Naive thymus-derived CD4-positive, alpha-beta T cell (primary cell): ENCODE measurements at regions of chr11 and their contacts with region 1.

Region 1: GRCh38 chr11:112219476-112220232 is 6.6 kb upstream of the PTS start:
- DNase-seq: peak in 7 of 9 donors; percentile 54 to 77 (median 69)
- ATAC-seq: peak; percentile 99
- H3K4me3 ChIP-seq: no peak overlapping the region
- H3K4me3 Mint-ChIP-seq: no peak overlapping the region
- H3K27ac ChIP-seq: no peak overlapping the region
- H3K27ac Mint-ChIP-seq: peak overlapping the region in 2 of 9 donors; percentile 38 to 59
- H3K4me1 ChIP-seq: no peaks in the 10 kb centered on the region
- H3K4me1 Mint-ChIP-seq: peaks cover 0 to 17% (median 3%) of the 10 kb centered on the region in 7 donors
- H3K27me3 ChIP-seq: no peaks in the 10 kb centered on the region
- H3K27me3 Mint-ChIP-seq: peaks cover 0 to 4% (median 0%) of the 10 kb centered on the region in 5 donors

Region 2: DNA sequence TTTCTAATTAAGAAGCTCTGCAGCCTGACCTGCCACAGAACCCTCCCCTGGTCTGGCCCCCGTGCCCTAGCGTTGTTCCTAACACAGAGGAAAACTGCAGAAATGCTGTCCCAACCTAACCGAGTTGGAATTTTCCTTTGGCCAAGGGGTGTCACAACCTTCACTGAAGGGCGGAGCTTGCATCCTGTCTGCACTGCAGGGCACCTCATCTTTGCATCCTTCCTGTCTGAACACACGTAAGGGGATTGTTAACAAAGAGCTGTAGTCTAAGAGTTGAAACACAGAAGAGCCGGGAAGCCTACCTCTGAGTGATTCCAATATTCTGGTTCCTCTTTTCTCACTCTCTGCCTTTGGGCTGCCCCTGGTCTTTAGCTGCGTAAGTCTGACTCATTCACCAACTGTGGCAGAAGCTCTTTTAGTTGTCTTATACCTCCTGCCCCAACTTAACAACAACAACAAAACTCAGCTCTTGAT is 280.9 kb before region 1 on chr11:
- CTCF ChIA-PET with region 1: no interaction called
- POLR2A ChIA-PET with region 1: no interaction called
- intact Hi-C with region 1: loop called in 1 of 2 experiments (anchors 5 kb)
- DNase-seq: peak in 6 of 9 donors; percentile 18 to 38 (median 27)
- ATAC-seq: peak; percentile 73
- H3K4me3 ChIP-seq: no peak overlapping the region
- H3K4me3 Mint-ChIP-seq: peak overlapping the region; percentile 59 to 95 (median 78)
- H3K27ac ChIP-seq: peak overlapping the region; percentile 49
- H3K27ac Mint-ChIP-seq: peak overlapping the region; percentile 67 to 96 (median 84)
- H3K4me1 ChIP-seq: peaks cover 4 to 29% of the 10 kb centered on the region in 2 donors
- H3K4me1 Mint-ChIP-seq: peaks cover 16 to 48% (median 32%) of the 10 kb centered on the region in 7 donors
- H3K27me3 ChIP-seq: no peaks in the 10 kb centered on the region
- H3K27me3 Mint-ChIP-seq: no peaks in the 10 kb centered on the region

Region 3: GRCh38 chr11:112134473-112134872 is 85.2 kb before region 1 on chr11:
- CTCF ChIA-PET with region 1: no interaction called
- POLR2A ChIA-PET with region 1: no interaction called
- intact Hi-C with region 1: no loop called
- DNase-seq: no peak
- ATAC-seq: no peak
- H3K4me3 ChIP-seq: no peak overlapping the region
- H3K4me3 Mint-ChIP-seq: no peak overlapping the region
- H3K27ac ChIP-seq: no peak overlapping the region
- H3K27ac Mint-ChIP-seq: peak overlapping the region in 1 of 9 donors; percentile 74
- H3K4me1 ChIP-seq: no peaks in the 10 kb centered on the region
- H3K4me1 Mint-ChIP-seq: peaks cover 0 to 9% (median 0%) of the 10 kb centered on the region in 7 donors
- H3K27me3 ChIP-seq: no peaks in the 10 kb centered on the region
- H3K27me3 Mint-ChIP-seq: no peaks in the 10 kb centered on the region

Region 4: GRCh38 chr11:112280268-112281126 is 60.8 kb after region 1 on chr11:
- CTCF ChIA-PET with region 1: interaction called, 141 read pairs
- POLR2A ChIA-PET with region 1: interaction called, 11 read pairs
- intact Hi-C with region 1: loop called (anchors 1 kb)
- DNase-seq: peak; percentile 27 to 81 (median 73)
- ATAC-seq: peak; percentile 95
- H3K4me3 ChIP-seq: peak overlapping the region; percentile 78
- H3K4me3 Mint-ChIP-seq: peak overlapping the region; percentile 91 to 97 (median 94)
- H3K27ac ChIP-seq: peak overlapping the region; percentile 31
- H3K27ac Mint-ChIP-seq: peak overlapping the region; percentile 46 to 86 (median 66)
- H3K4me1 ChIP-seq: no peaks in the 10 kb centered on the region
- H3K4me1 Mint-ChIP-seq: peaks cover 7 to 36% (median 10%) of the 10 kb centered on the region in 7 donors
- H3K27me3 ChIP-seq: no peaks in the 10 kb centered on the region
- H3K27me3 Mint-ChIP-seq: no peaks in the 10 kb centered on the region

Region 5: GRCh38 chr11:112555491-112556364 is 336.1 kb after region 1 on chr11:
- CTCF ChIA-PET with region 1: interaction called, 14 read pairs
- POLR2A ChIA-PET with region 1: interaction called, 6 read pairs
- intact Hi-C with region 1: loop called (anchors 1 kb)
- DNase-seq: peak; percentile 43 to 79 (median 64)
- ATAC-seq: peak; percentile 85
- H3K4me3 ChIP-seq: no peak overlapping the region
- H3K4me3 Mint-ChIP-seq: no peak overlapping the region
- H3K27ac ChIP-seq: no peak overlapping the region
- H3K27ac Mint-ChIP-seq: peak overlapping the region in 3 of 9 donors; percentile 26 to 84 (median 52)
- H3K4me1 ChIP-seq: no peaks in the 10 kb centered on the region
- H3K4me1 Mint-ChIP-seq: peaks cover 0 to 5% (median 4%) of the 10 kb centered on the region in 7 donors
- H3K27me3 ChIP-seq: no peaks in the 10 kb centered on the region
- H3K27me3 Mint-ChIP-seq: peaks cover 0 to 6% (median 0%) of the 10 kb centered on the region in 5 donors

Region 6: DNA sequence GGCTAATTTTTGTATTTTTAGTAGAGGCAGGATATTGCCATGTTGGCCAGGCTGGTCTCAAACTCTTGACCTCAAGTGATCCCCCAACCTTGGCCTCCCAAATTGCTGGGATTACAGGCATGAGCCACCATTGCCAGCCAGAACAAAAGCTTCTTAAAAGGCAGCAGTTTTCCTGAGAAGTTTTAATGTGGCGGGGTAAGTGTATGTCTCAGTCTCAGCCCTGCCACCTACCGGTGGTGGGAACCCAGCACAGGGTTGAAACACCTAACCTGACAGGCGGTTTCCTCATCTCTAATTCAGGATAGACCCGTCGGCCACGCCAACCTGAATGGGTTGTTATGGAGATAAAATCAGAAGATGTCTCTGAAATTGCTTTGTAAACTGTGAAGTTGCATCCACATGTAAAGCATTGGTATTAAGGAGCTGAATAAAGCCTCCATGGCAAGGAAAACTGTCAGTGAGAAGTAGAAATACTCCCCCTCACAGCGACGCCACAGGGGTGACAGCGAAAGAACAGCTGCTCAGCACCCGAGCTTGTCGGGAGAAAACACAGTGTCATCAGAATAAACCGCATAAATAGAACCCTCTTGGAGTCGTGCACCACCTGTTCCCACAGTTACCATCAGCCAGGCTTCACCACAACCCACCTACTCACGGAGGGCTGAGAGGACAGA is 575.6 kb after region 1 on chr11:
- CTCF ChIA-PET with region 1: no interaction called
- POLR2A ChIA-PET with region 1: no interaction called
- intact Hi-C with region 1: loop called in 1 of 2 experiments (anchors 1 kb)
- DNase-seq: peak in 2 of 9 donors; percentile 11 to 14
- ATAC-seq: no peak
- H3K4me3 ChIP-seq: no peak overlapping the region
- H3K4me3 Mint-ChIP-seq: no peak overlapping the region
- H3K27ac ChIP-seq: no peak overlapping the region
- H3K27ac Mint-ChIP-seq: no peak overlapping the region
- H3K4me1 ChIP-seq: no peaks in the 10 kb centered on the region
- H3K4me1 Mint-ChIP-seq: peaks cover 0 to 12% (median 4%) of the 10 kb centered on the region in 7 donors
- H3K27me3 ChIP-seq: no peaks in the 10 kb centered on the region
- H3K27me3 Mint-ChIP-seq: peaks cover 6 to 20% (median 13%) of the 10 kb centered on the region in 5 donors

Region 7: DNA sequence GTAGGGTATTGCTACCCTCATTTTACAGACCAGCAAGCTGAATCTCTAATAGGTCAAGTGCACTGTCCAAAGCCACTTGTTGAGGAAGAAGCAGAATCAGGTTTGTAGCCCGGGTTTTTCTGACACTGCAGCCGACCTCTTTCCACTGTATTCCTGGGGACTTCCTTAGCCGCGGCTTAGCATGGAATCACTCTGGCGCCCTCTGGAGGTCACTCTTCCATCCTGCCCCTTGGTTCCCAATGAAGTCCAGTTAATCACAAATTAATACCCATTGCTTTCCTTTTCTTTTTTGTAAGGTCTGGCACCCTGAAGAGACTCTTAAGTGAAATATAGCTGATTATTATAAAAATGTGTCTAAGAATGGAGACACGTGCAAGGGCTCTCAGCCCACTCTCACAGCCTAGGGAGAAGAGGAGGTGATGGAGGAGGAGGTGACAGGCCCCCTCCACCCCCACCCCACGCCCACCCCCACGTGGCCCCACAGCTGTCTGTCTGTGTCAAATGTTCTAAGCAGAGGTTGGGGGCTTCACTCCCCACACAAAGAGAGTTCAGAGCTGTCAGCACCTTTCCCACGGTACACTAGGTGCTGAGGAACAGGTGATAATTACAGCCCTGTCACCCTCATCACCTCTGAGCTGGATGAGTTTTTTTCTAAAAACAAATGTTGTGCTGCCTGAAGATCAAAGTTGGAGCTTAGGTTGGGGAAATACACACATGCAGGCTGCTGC is 1313.2 kb after region 1 on chr11:
- CTCF ChIA-PET with region 1: no interaction called
- POLR2A ChIA-PET with region 1: no interaction called
- intact Hi-C with region 1: loop called (anchors 1 to 5 kb)
- DNase-seq: peak in 8 of 9 donors; percentile 18 to 56 (median 34)
- ATAC-seq: peak; percentile 72
- H3K4me3 ChIP-seq: no peak overlapping the region
- H3K4me3 Mint-ChIP-seq: no peak overlapping the region
- H3K27ac ChIP-seq: no peak overlapping the region
- H3K27ac Mint-ChIP-seq: no peak overlapping the region
- H3K4me1 ChIP-seq: no peaks in the 10 kb centered on the region
- H3K4me1 Mint-ChIP-seq: no peaks in the 10 kb centered on the region
- H3K27me3 ChIP-seq: no peaks in the 10 kb centered on the region
- H3K27me3 Mint-ChIP-seq: peaks cover 18 to 42% (median 29%) of the 10 kb centered on the region in 5 donors

Region 8: GRCh38 chr11:113796663-113797259 is 1577.1 kb after region 1 on chr11:
- CTCF ChIA-PET with region 1: no interaction called
- POLR2A ChIA-PET with region 1: no interaction called
- intact Hi-C with region 1: loop called in 1 of 2 experiments (anchors 5 kb)
- DNase-seq: peak in 4 of 9 donors; percentile 7 to 24 (median 14)
- ATAC-seq: peak; percentile 75
- H3K4me3 ChIP-seq: no peak overlapping the region
- H3K4me3 Mint-ChIP-seq: no peak overlapping the region
- H3K27ac ChIP-seq: no peak overlapping the region
- H3K27ac Mint-ChIP-seq: no peak overlapping the region
- H3K4me1 ChIP-seq: no peaks in the 10 kb centered on the region
- H3K4me1 Mint-ChIP-seq: no peaks in the 10 kb centered on the region
- H3K27me3 ChIP-seq: no peaks in the 10 kb centered on the region
- H3K27me3 Mint-ChIP-seq: no peaks in the 10 kb centered on the region